ENCODE measurements at regions of chr15 and their contacts with region 1.

Region 1: GRCh38 chr15:51971375-51972133 is at the start of gene LEO1:
- DNase-seq: peak; percentile 89
- H3K4me3 Mint-ChIP-seq: peak within 1 kb of the TSS; percentile 99
- H3K27ac Mint-ChIP-seq: peak within 1 kb of the TSS; percentile 92
- H3K4me1 Mint-ChIP-seq: peaks cover 14% of the 10 kb centered on the region
- H3K27me3 Mint-ChIP-seq: peaks cover 1% of the 10 kb centered on the region
- total RNA-seq, gene LEO1: 38.2 TPM in 2 replicates

Region 2: DNA sequence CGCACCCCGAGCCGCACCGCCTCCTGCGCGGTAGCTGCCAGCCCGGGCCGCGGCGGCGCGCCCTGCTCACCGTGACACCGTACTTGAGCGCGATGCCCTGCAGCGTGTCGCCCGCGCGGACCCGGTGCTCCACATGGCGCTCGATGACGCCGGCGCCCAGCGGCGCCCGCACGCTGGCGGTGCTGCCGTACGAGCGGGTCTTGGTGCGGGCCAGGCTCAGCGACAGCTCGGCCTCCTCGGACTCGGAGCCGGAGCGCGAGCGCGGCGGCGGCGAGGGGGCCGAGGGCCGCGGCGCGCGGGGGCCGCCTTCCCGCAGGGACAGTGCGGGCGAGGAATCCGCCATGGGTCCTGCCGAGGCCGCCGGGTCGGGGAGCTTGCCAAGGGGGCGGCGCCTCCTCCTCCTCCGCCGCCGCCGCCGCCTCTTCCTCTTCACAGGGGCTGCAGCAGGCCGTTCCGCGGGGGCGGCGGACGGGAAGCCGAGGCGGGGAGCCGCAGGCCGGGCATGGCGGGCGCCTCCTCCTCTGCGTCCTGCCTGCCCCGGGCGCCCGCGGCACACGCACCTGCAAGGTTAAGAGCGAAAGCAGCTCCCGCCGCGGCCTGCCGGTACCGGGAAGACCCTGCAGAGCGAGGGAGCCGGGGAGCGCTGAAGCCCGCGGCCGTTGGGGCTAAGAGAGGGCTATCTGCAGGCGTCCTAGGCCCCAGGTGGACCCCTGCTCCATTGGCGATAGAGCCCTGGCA is 234.1 kb before region 1 on chr15 and contains the start of gene LYSMD2:
- intact Hi-C with region 1: loop called (anchors 10 kb)
- DNase-seq: peak; percentile 59
- H3K4me3 Mint-ChIP-seq: peak within 1 kb of the TSS; percentile 78
- H3K27ac Mint-ChIP-seq: peak within 1 kb of the TSS; percentile 74
- H3K4me1 Mint-ChIP-seq: peaks cover 42% of the 10 kb centered on the region
- H3K27me3 Mint-ChIP-seq: peaks cover 6% of the 10 kb centered on the region
- total RNA-seq, gene LYSMD2: 4.0 and 5.8 TPM in 2 replicates

Region 3: DNA sequence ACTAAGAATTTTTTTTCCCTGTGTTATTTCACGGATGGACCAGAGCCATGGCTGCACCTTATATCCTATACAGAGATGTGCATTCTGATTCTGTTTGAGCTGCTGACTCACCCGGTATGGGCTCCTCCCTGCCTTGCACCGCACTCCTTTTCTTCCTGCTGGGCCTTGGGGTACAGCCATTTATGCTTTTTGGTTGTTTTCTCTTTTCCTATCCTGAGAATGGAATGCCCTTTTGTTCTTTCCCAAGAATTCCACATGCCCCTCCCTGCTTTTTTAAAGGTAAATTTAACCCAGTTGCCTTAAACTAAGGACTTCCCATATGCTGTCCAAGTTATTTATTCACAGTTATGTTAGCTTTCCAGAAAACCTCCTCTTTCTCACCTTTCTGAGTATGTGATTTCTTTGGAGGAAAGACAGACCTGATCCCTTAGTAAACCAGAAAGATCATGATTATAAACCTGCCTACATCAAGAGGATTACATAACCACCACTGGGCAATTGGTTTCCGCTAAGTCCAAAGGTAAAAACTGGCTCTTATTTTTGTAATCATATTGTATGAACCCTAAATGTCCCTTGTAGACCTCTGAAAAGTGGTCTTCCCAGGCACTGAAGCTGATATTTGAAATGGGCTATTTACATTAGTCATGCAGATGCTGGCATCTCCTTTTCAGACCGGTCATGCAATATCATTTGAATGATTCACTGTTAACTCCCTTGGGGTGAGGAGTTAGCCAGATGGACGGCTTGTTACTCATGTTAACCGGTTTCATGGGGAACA is 96.6 kb before region 1 on chr15:
- intact Hi-C with region 1: no loop called
- DNase-seq: no peak
- H3K4me3 Mint-ChIP-seq: no peak overlapping the region
- H3K27ac Mint-ChIP-seq: no peak overlapping the region
- H3K4me1 Mint-ChIP-seq: peaks cover 11% of the 10 kb centered on the region
- H3K27me3 Mint-ChIP-seq: no peaks in the 10 kb centered on the region

Region 4: DNA sequence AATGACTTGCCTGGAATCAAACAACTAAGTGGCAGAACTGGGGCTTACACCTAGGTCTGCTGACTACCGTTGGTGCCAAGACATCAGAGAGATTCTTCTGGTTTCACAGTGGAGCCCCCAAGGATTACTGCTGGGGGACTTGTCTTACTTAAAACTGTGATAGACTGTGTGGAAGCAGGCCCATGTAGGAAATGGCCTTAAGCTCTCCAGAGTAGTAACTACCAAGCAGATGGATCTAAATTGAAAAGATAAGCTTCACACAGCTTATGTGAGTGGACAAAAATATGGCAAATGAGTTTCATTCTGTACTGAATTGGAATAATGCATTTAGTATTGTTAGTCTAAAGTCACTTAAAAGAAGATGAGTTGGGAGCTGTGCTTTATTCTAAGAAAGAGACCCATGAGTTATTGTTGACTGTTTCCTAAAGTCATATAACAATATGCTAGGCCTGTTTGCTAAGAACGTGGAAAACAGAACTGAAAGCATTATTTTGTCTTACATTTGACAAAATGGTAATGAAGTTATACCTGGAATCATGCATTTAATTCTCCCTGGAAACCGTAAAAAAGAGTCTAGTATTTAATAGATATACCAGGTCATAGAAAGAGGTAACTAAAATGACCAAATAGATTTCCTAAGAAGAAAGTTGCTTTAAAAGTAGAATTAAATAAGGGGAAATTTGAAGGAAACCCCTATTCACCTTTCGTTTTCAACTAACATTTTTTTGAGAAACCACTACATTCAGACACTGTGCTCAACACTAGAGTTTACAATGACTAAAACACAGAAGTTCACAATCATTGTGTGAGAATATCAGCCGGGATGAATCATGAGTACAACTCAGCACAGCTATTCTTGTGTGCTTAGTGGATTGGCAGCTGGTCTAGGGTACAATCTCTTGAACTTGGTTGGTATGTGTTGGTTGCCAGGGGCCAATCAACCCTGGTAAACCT is 34.5 kb after region 1 on chr15:
- intact Hi-C with region 1: loop called (anchors 5 kb)
- DNase-seq: no peak
- H3K4me3 Mint-ChIP-seq: peak overlapping the region; percentile 26
- H3K27ac Mint-ChIP-seq: peak overlapping the region; percentile 86
- H3K4me1 Mint-ChIP-seq: peaks cover 70% of the 10 kb centered on the region
- H3K27me3 Mint-ChIP-seq: no peaks in the 10 kb centered on the region

Region 5: DNA sequence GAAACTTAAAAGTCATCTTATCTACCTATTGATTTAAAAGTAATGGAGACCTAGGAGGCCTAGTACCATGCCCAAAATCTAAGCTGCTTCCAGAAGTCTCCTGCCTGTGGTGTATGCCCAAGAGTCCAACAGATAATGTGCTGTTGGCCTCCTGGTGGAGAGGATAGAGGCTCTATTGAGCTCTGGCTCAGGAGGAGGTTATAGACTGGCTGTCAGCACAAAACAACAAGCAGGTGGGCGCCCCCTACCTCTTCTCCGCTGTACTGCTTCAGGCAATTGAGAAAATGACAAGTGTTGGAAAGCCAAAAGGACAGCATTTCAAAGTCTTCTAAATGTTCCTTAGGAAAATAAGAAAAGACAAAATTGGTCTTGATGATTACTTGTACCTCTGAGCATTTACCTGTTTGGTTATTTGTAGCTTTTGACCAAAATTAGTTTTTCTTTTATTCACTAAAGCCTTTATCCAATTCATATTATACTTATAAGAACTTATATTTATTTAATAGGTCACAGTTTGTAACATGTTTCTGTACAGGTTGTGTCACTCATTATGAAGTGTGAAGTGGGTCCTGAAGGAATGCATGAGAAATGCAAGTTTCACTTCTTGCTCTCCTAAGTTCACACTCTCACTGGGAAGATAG is 236.9 kb after region 1 on chr15:
- intact Hi-C with region 1: loop called (anchors 5 kb)
- DNase-seq: peak; percentile 65
- H3K4me3 Mint-ChIP-seq: no peak overlapping the region
- H3K27ac Mint-ChIP-seq: no peak overlapping the region
- H3K4me1 Mint-ChIP-seq: peaks cover 4% of the 10 kb centered on the region
- H3K27me3 Mint-ChIP-seq: no peaks in the 10 kb centered on the region